BJ (cell line): ENCODE measurements at regions of chr10 and their contacts with region 1.

Region 1: DNA sequence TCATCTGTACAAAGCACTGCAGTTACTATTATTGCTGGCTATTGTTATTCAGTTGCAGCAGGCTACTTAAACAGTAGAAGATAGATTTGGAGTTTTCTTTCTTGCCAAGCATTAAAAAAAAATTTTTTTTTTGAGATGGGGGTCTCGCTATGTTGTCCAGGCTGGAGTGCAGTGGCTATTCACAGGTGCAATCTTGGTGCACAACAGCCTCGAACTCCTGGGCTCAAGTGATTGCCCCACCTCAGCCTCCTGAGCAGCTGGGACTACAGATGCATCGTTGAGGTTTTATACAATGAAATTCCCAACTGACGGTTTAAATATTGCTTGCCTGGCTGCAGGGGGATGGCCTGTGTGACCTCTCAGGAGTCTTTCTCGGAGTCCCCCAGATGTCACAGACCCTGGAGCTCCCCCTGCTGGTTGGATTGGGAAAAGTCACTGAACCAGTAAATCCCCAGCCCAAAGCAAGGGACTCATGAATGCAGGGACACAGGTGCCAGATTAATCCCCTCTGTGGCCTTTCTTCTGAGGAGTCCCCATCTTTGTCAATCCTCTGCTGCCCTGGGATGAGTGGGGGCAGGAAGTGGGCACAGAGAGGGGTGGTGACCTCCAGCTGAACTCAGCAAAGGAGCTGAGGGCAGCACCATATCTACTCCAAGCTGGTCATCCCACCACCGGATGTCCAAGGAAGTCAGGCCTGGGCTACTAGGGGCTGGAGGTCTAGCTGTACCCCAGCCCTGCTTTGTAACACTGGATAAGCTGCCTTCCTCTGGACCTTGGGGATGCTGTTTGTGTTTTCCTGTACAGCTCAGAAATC is 149.6 kb downstream of the C10orf105 start:
- DNase-seq: no peak
- H3K4me3 ChIP-seq: no peak overlapping the region
- H3K27me3 ChIP-seq: peaks cover 6% of the 10 kb centered on the region; the same call in 1 of the 2 replicates
- CTCF ChIP-seq: peak; percentile 85

Region 2: GRCh38 chr10:71383972-71384687 is 185.9 kb before region 1 on chr10:
- CTCF ChIA-PET with region 1: interaction called, 28 read pairs
- POLR2A ChIA-PET with region 1: no interaction called
- DNase-seq: no peak
- H3K4me3 ChIP-seq: no peak overlapping the region
- H3K27me3 ChIP-seq: peaks cover 12% of the 10 kb centered on the region
- CTCF ChIP-seq: peak; percentile 97

Region 3: GRCh38 chr10:71554671-71555070 is 15.3 kb before region 1 on chr10:
- CTCF ChIA-PET with region 1: interaction called, 20 read pairs
- POLR2A ChIA-PET with region 1: no interaction called
- DNase-seq: no peak
- H3K4me3 ChIP-seq: no peak overlapping the region
- H3K27me3 ChIP-seq: peaks cover 6% of the 10 kb centered on the region
- CTCF ChIP-seq: no peak

Region 4: GRCh38 chr10:71608819-71609768 is 39.1 kb after region 1 on chr10:
- CTCF ChIA-PET with region 1: interaction called, 18 read pairs
- POLR2A ChIA-PET with region 1: no interaction called
- DNase-seq: no peak
- H3K4me3 ChIP-seq: no peak overlapping the region
- H3K27me3 ChIP-seq: peaks cover 5% of the 10 kb centered on the region
- CTCF ChIP-seq: peak; percentile 92

Region 5: GRCh38 chr10:71727738-71728737 is 158.1 kb after region 1 on chr10:
- CTCF ChIA-PET with region 1: no interaction called
- POLR2A ChIA-PET with region 1: no interaction called
- DNase-seq: no peak
- H3K4me3 ChIP-seq: no peak overlapping the region
- H3K27me3 ChIP-seq: no peaks in the 10 kb centered on the region
- CTCF ChIP-seq: no peak